ENCODE measurements at regions of chrX and their contacts with region 1.

Region 1: DNA sequence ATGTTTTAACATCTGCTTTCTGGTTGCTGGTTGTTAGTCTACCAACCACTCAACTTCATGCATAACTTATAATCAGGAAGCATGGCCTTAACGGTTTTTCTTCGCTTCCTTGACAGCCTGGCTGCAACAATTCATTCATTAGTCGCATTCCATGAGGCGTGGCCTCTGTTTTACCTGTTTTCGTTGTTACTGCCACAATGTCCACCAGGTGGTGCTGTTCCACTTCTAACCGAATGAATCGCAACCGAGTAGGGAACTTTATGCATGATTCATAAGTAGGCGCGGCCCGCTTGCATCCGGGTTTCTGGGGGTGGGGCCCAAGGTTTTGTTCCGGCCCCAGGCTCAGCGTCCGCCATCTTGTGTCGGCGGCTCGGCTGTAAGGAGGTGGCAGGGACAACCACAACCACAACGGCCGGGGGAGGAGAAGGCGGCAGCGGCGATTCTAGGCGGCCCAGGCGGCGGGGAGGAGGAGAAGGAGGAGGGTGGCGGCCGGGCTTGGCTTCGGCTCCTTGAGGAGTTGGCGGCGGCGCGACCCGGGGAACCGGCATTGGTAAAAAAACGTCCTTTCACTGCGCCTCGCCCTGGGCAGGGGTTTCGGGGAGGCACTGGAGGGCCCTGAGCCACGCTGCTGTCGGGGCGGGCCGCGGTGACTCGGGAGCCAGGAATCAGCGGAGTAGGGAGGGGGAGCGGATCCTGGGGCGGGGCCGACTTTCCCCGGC is at the start of gene UBA1:
- DNase-seq: peak; percentile 97
- H3K4me3 Mint-ChIP-seq: peak within 1 kb of the TSS; percentile 94
- H3K27ac Mint-ChIP-seq: peak within 1 kb of the TSS; percentile 98
- H3K4me1 Mint-ChIP-seq: peaks cover 35% of the 10 kb centered on the region
- H3K27me3 Mint-ChIP-seq: no peaks in the 10 kb centered on the region
- total RNA-seq, gene UBA1: 233 and 246 TPM in 2 replicates

Region 2: GRCh38 chrX:47217642-47218279 is 24.1 kb after region 1 on chrX:
- intact Hi-C with region 1: loop called (anchors 1 kb)
- DNase-seq: peak; percentile 98
- H3K4me3 Mint-ChIP-seq: peak overlapping the region; percentile 92
- H3K27ac Mint-ChIP-seq: peak overlapping the region; percentile 99
- H3K4me1 Mint-ChIP-seq: peaks cover 37% of the 10 kb centered on the region
- H3K27me3 Mint-ChIP-seq: no peaks in the 10 kb centered on the region

Region 3: DNA sequence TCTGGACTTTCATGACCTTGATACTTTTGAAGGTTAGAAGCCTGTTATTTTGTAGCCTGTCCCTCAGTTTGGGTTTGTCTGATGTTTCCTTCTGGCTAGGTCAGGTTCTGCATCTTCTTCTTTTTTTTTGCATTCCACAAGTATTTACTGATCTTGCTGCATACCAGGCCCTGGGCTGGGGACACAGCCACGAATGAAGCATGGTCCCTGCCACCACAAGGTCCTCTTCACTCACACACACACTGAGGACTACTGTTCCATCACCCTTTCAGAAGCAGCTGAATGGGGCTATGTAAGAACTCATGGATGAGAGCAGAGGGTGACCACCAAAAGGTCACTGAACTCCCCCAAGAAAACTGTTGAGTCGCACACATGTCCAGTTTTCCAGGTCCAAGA is 78.4 kb after region 1 on chrX:
- intact Hi-C with region 1: no loop called
- DNase-seq: no peak
- H3K4me3 Mint-ChIP-seq: no peak overlapping the region
- H3K27ac Mint-ChIP-seq: no peak overlapping the region
- H3K4me1 Mint-ChIP-seq: peaks cover 4% of the 10 kb centered on the region
- H3K27me3 Mint-ChIP-seq: no peaks in the 10 kb centered on the region

Region 4: GRCh38 chrX:47311932-47312774 is 118.5 kb after region 1 on chrX:
- intact Hi-C with region 1: loop called (anchors 1 kb)
- DNase-seq: peak; percentile 77
- H3K4me3 Mint-ChIP-seq: no peak overlapping the region
- H3K27ac Mint-ChIP-seq: no peak overlapping the region
- H3K4me1 Mint-ChIP-seq: no peaks in the 10 kb centered on the region
- H3K27me3 Mint-ChIP-seq: no peaks in the 10 kb centered on the region

Region 5: GRCh38 chrX:47384502-47384901 is 190.9 kb after region 1 on chrX:
- intact Hi-C with region 1: loop called (anchors 1 kb)
- DNase-seq: peak; percentile 90
- H3K4me3 Mint-ChIP-seq: no peak overlapping the region
- H3K27ac Mint-ChIP-seq: no peak overlapping the region
- H3K4me1 Mint-ChIP-seq: peaks cover 8% of the 10 kb centered on the region
- H3K27me3 Mint-ChIP-seq: no peaks in the 10 kb centered on the region

Region 6: GRCh38 chrX:47523297-47523696 is 329.7 kb after region 1 on chrX:
- intact Hi-C with region 1: loop called (anchors 1 kb)
- DNase-seq: peak; percentile 94
- H3K4me3 Mint-ChIP-seq: peak overlapping the region; percentile 77
- H3K27ac Mint-ChIP-seq: no peak overlapping the region
- H3K4me1 Mint-ChIP-seq: peaks cover 2% of the 10 kb centered on the region
- H3K27me3 Mint-ChIP-seq: no peaks in the 10 kb centered on the region

Measured in activated CD4-positive, alpha-beta T cell treated with anti-CD3 and anti-CD28 coated beads, Interleukin-2, amount 10 ng/mL, durations not matched to agents 24 days and 14 days (primary cell).